ENCODE measurements at regions of chr15 and their contacts with region 1.

Region 1: GRCh38 chr15:50590288-50590687 is 43.8 kb upstream of the USP50 start:
- DNase-seq: no peak
- H3K4me3 ChIP-seq: no peak overlapping the region
- H3K27ac ChIP-seq: no peak overlapping the region
- H3K4me1 ChIP-seq: no peaks in the 10 kb centered on the region
- H3K27me3 ChIP-seq: no peaks in the 10 kb centered on the region
- CTCF ChIP-seq: no peak
- POLR2A ChIP-seq: no peak

Region 2: DNA sequence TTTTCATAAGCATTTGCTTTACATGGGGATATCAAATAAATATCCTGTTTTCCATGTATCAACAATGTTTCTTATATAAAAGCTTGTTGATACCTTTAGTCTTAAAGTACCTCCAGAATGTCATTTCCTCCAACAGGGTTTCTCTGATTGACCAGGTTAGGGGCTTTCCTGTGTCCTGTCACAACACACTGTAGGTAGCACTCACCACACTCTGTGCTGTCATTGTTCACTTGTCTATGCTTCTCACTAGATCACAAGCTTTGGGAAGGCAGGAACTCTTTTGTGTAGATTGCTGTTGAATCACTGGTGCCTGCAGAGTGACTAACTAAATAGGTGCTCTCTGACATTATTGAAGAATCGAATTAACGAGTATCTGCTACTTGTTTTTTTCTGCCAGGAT is 93.6 kb before region 1 on chr15:
- intact Hi-C with region 1: loop called (anchors 10 kb)
- DNase-seq: no peak
- H3K4me3 ChIP-seq: no peak overlapping the region
- H3K27ac ChIP-seq: no peak overlapping the region
- H3K4me1 ChIP-seq: peaks cover 0 to 5% (median 0%) of the 10 kb centered on the region in 6 donors
- H3K27me3 ChIP-seq: no peaks in the 10 kb centered on the region
- CTCF ChIP-seq: no peak
- POLR2A ChIP-seq: no peak

Region 3: DNA sequence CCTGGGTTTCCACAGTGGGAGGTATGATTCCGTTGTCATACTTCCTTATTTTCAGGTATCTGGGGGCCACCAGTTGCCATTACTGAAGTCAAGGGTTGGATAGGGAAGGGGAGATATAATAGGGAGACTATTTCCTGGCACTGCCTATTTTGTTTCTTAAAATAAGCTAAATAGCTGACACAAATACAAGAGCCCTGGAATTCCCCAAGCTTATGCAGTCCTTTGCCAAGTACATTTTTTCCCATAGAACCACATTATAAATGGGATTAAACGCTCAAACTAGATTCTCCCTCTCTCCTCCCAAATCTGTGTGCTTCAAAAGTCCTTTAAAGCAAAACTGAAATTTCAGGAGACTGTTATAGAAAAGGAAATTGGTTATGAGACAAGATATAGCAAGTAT is 386.9 kb after region 1 on chr15:
- intact Hi-C with region 1: no loop called
- DNase-seq: no peak
- H3K4me3 ChIP-seq: no peak overlapping the region
- H3K27ac ChIP-seq: peak overlapping the region in 3 of 8 donors; percentile 13 to 31 (median 19)
- H3K4me1 ChIP-seq: peaks cover 0 to 14% (median 5%) of the 10 kb centered on the region in 6 donors
- H3K27me3 ChIP-seq: no peaks in the 10 kb centered on the region
- CTCF ChIP-seq: no peak
- POLR2A ChIP-seq: no peak